RWPE1 (cell line): ENCODE measurements at regions of chr16 and their contacts with region 1.

Region 1: GRCh38 chr16:66650707-66651473 is 45.7 kb downstream of the CMTM4 start:
- DNase-seq: peak; percentile 74
- H3K27ac ChIP-seq: peak overlapping the region; percentile 23; the same call in 1 of the 2 replicates
- CTCF ChIP-seq: peak; percentile 95

Region 2: GRCh38 chr16:66639091-66639885 is 11.6 kb before region 1 on chr16:
- CTCF ChIA-PET with region 1: interaction called, 15 read pairs
- POLR2A ChIA-PET with region 1: no interaction called
- DNase-seq: peak; percentile 50
- H3K27ac ChIP-seq: peak overlapping the region; percentile 57
- CTCF ChIP-seq: no peak